Posterior cingulate gyrus (tissue), 11 donors: ENCODE measurements at regions of chr20 and their contacts with region 1.

Region 1: DNA sequence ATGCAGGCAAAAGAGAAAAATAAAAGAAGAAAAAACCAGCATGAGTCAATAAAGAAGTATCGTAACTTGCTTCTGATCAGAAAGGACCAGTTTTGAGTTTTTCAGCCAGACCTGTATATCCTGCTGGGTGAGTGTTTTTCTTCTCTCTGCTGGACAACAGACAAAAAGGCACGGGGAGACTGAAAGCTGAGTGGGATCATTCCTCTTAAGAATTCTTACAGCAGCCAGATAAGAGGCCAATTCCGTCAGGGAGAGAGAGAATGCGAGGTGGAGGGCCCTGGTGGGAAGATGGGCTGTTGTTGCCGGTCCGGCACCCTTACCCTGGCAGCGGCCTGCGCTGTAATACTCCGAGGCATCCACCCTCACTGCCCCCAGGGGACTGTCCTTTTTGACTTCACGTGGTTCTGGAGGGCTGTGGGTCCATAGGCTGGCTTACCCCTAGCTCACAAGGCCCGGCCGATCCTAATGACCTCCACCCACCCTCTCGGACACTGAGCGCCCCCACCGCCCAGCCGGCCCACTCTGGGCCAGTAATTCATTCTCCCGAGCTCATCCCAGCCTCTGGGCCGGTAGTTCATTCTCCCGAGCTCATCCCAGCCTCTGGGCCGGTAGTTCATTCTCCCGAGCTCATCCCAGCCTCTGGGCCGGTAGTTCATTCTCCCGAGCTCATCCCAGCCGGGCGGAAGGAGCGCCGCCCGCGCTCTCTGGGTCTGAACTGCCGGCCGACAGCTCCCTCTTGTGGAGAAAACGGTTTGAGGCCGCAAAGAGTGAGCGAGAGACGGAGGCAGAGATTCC is 118.3 kb upstream of the SIRPA start:
- DNase-seq: peak; percentile 79 to 98 (median 90)

Region 2: GRCh38 chr20:2101865-2102584 is 325.1 kb after region 1 on chr20:
- intact Hi-C with region 1: loop called (anchors 10 kb)
- DNase-seq: peak; percentile 84 to 98 (median 90)